CD4-positive, alpha-beta T cell (primary cell): ENCODE measurements at regions of chr1 and their contacts with region 1.

Region 1: DNA sequence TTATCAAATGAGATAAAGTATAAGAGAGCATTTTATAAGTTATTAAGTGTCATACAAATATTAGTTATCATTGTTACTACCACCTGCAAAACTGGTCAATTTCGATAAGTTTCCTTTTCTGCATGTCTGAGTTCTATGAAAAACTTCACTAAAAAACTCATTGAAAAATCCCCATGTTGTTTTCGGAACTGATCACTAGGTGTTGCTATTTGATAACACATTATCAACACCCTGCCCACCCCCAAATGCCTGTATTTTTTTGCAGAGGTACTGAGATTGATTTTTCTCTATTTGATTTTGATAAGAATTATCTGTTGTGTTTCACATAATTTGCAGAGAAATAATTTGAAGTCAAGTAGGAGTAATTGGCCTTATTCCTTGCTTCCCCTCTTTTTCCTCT is 22.1 kb upstream of the DISP1 start:
- DNase-seq: peak in 3 of 14 experiments; percentile 23 to 41 (median 38)
- ATAC-seq: no peak
- H3K4me3 ChIP-seq: no peak overlapping the region
- H3K4me3 Mint-ChIP-seq: no peak overlapping the region
- H3K27ac ChIP-seq: no peak overlapping the region
- H3K27ac Mint-ChIP-seq: no peak overlapping the region
- H3K4me1 ChIP-seq: no peaks in the 10 kb centered on the region
- H3K4me1 Mint-ChIP-seq: no peaks in the 10 kb centered on the region
- H3K27me3 ChIP-seq: no peaks in the 10 kb centered on the region
- H3K27me3 Mint-ChIP-seq: no peaks in the 10 kb centered on the region
- CTCF ChIP-seq: peak; percentile 74

Region 2: GRCh38 chr1:221945669-221946068 is 847.1 kb before region 1 on chr1:
- CTCF ChIA-PET with region 1: no interaction called
- POLR2A ChIA-PET with region 1: no interaction called
- intact Hi-C with region 1: no loop called
- DNase-seq: no peak
- ATAC-seq: no peak
- H3K4me3 ChIP-seq: no peak overlapping the region
- H3K4me3 Mint-ChIP-seq: no peak overlapping the region
- H3K27ac ChIP-seq: no peak overlapping the region
- H3K27ac Mint-ChIP-seq: no peak overlapping the region
- H3K4me1 ChIP-seq: no peaks in the 10 kb centered on the region
- H3K4me1 Mint-ChIP-seq: no peaks in the 10 kb centered on the region
- H3K27me3 ChIP-seq: peaks cover 0 to 2% of the 10 kb centered on the region in 2 experiments
- H3K27me3 Mint-ChIP-seq: no peaks in the 10 kb centered on the region
- CTCF ChIP-seq: no peak

Region 3: DNA sequence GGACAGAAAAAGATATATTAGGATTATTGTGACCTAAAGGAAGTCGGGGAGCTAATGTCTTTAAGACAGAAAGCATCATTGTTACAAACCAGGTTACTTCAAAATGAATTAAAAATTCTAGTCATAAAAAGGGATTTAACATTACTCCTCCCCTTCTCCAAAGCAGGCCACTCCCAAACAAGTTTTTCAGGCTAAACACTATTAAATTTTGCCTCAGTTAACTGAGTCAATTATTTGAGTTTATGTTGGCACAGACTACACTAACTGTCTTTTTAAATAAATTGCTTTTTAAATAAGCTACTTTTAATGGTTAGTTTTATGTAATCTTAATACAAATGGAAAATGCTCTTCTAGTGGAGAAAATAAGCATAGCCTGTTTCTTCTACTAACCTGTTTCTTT is 655.9 kb before region 1 on chr1:
- CTCF ChIA-PET with region 1: no interaction called
- POLR2A ChIA-PET with region 1: no interaction called
- intact Hi-C with region 1: no loop called
- DNase-seq: no peak
- ATAC-seq: no peak
- H3K4me3 ChIP-seq: no peak overlapping the region
- H3K4me3 Mint-ChIP-seq: no peak overlapping the region
- H3K27ac ChIP-seq: no peak overlapping the region
- H3K27ac Mint-ChIP-seq: no peak overlapping the region
- H3K4me1 ChIP-seq: no peaks in the 10 kb centered on the region
- H3K4me1 Mint-ChIP-seq: no peaks in the 10 kb centered on the region
- H3K27me3 ChIP-seq: no peaks in the 10 kb centered on the region
- H3K27me3 Mint-ChIP-seq: no peaks in the 10 kb centered on the region
- CTCF ChIP-seq: no peak

Region 4: DNA sequence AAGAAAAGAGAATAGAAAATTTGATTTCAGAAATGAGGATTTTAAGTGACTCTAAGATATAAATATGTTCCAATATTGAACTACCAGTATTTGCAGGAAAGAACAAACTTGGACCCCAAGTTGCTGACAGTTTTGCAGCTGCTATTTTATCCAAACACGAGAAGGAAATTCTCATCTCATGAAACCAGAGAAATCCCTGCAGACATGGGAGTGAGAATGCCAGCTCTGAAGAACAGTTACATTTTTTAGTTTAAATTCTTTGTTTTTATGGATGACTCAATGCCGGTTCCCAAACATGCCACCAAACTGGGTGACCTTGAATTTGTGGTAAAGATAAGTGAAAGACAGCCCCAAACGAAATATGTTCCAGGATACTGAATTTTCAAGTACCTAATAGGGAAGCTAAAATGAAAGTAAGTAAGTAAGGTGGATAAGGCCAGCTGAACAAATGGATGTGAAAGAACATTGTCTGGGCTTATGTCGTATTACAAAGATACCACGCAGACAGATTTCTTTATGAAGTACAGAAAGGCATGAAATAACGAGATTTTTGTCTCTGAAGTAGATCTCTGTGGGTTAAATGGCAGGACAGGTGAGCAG is 330.4 kb after region 1 on chr1:
- CTCF ChIA-PET with region 1: interaction called, 5 read pairs
- POLR2A ChIA-PET with region 1: no interaction called
- intact Hi-C with region 1: loop called (anchors 2 kb)
- DNase-seq: no peak
- ATAC-seq: no peak
- H3K4me3 ChIP-seq: peak overlapping the region; percentile 23
- H3K4me3 Mint-ChIP-seq: peak overlapping the region; percentile 20
- H3K27ac ChIP-seq: no peak overlapping the region
- H3K27ac Mint-ChIP-seq: no peak overlapping the region
- H3K4me1 ChIP-seq: peaks cover 6% of the 10 kb centered on the region
- H3K4me1 Mint-ChIP-seq: peaks cover 8% of the 10 kb centered on the region
- H3K27me3 ChIP-seq: no peaks in the 10 kb centered on the region
- H3K27me3 Mint-ChIP-seq: no peaks in the 10 kb centered on the region
- CTCF ChIP-seq: no peak